GM12878 (cell line): ENCODE measurements at regions of chr17 and their contacts with region 1.

Region 1: GRCh38 chr17:4293572-4293971 is 29.8 kb upstream of the ANKFY1 start:
- DNase-seq: peak; percentile 19
- ATAC-seq: peak; percentile 84
- H3K4me3 ChIP-seq: no peak overlapping the region
- H3K27ac ChIP-seq: peak overlapping the region; percentile 56
- H3K4me1 ChIP-seq: peaks cover 35% of the 10 kb centered on the region
- H3K27me3 ChIP-seq: no peaks in the 10 kb centered on the region
- CTCF ChIP-seq: no peak
- EP300 ChIP-seq: peak in 1 of 2 experiments; percentile 55; a peak in 1 of 4 replicates
- POLR2A ChIP-seq: no peak
- RAD21 ChIP-seq: no peak

Region 2: GRCh38 chr17:4304417-4305027 is 10.9 kb after region 1 on chr17:
- CTCF ChIA-PET with region 1: interaction called, 11 read pairs
- POLR2A ChIA-PET with region 1: no interaction called
- RAD21 ChIA-PET with region 1: interaction called, 3 read pairs
- SMC1A ChIA-PET with region 1: interaction called, 14 read pairs
- in situ Hi-C with region 1: no loop called
- intact Hi-C with region 1: no loop called
- DNase-seq: no peak
- ATAC-seq: peak; percentile 96
- H3K4me3 ChIP-seq: no peak overlapping the region
- H3K27ac ChIP-seq: no peak overlapping the region
- H3K4me1 ChIP-seq: peaks cover 3% of the 10 kb centered on the region; the same call in 1 of the 2 replicates
- H3K27me3 ChIP-seq: no peaks in the 10 kb centered on the region
- CTCF ChIP-seq: peak; percentile 60 to 72 (median 62)
- EP300 ChIP-seq: no peak
- POLR2A ChIP-seq: no peak
- RAD21 ChIP-seq: peak; percentile 51

Region 3: GRCh38 chr17:4483012-4483840 is 189.7 kb after region 1 on chr17:
- CTCF ChIA-PET with region 1: no interaction called
- POLR2A ChIA-PET with region 1: no interaction called
- RAD21 ChIA-PET with region 1: no interaction called
- SMC1A ChIA-PET with region 1: no interaction called
- in situ Hi-C with region 1: no loop called
- intact Hi-C with region 1: no loop called
- DNase-seq: no peak
- ATAC-seq: no peak
- H3K4me3 ChIP-seq: no peak overlapping the region
- H3K27ac ChIP-seq: no peak overlapping the region
- H3K4me1 ChIP-seq: peaks cover 8% of the 10 kb centered on the region
- H3K27me3 ChIP-seq: no peaks in the 10 kb centered on the region; a peak in 2 of 4 replicates
- CTCF ChIP-seq: no peak
- EP300 ChIP-seq: no peak
- POLR2A ChIP-seq: no peak
- RAD21 ChIP-seq: no peak